Activated B cell treated with CpG ODN at 0.5 μM for 24 hours (primary cell): ENCODE measurements at regions of chr19 and their contacts with region 1.

Region 1: DNA sequence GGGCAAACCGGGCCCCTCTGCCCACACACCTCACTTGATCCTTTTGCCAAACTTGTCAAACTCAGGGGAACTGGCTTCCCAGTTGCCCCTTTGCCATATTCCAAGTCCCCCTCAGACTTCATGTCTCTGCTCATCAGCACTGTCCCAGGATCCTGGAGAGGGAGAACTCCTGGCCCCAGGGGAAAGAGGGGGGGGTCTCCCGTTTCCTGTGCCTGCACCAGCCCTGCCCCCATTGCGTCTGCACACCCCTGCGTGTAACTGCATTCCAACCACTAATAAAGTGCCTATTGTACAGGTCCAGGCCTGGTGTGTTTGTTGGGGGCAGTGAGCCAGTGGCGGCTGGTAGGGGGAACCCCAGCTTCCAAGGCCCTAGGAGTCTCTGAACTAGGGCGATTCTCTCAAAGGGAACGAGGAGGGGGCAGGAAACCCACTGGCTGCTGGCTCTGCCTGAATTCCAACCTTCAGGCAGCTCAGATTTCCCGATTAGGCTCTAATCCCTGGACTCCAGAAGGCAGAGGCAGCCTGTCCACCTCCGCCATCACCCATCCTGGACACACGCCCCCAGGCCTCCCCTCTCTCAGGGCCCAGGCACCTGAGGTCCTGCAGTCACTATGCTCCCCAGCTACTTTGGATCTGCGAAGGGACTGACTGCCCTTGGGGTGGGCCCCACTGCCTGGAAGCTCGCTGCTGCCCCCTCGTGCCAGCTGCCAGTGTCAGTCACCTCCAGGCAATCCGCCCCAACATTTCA is 9.7 kb upstream of the ILF3 start:
- DNase-seq: peak; percentile 80
- ATAC-seq: peak; percentile 82
- H3K4me3 Mint-ChIP-seq: no peak overlapping the region
- H3K27ac Mint-ChIP-seq: peak overlapping the region; percentile 84
- H3K4me1 Mint-ChIP-seq: peaks cover 23% of the 10 kb centered on the region
- H3K27me3 Mint-ChIP-seq: no peaks in the 10 kb centered on the region
- CTCF ChIP-seq: peak; percentile 66

Region 2: GRCh38 chr19:9986787-9987281 is 657.6 kb before region 1 on chr19:
- CTCF ChIA-PET with region 1: no interaction called
- POLR2A ChIA-PET with region 1: no interaction called
- intact Hi-C with region 1: no loop called
- DNase-seq: no peak
- ATAC-seq: no peak
- H3K4me3 Mint-ChIP-seq: no peak overlapping the region
- H3K27ac Mint-ChIP-seq: no peak overlapping the region
- H3K4me1 Mint-ChIP-seq: peaks cover 6% of the 10 kb centered on the region
- H3K27me3 Mint-ChIP-seq: peaks cover 12% of the 10 kb centered on the region
- CTCF ChIP-seq: no peak

Region 3: GRCh38 chr19:10517760-10518443 is 126.5 kb before region 1 on chr19:
- CTCF ChIA-PET with region 1: no interaction called
- POLR2A ChIA-PET with region 1: no interaction called
- intact Hi-C with region 1: no loop called
- DNase-seq: peak; percentile 21
- ATAC-seq: peak; percentile 34
- H3K4me3 Mint-ChIP-seq: peak overlapping the region; percentile 28
- H3K27ac Mint-ChIP-seq: no peak overlapping the region
- H3K4me1 Mint-ChIP-seq: peaks cover 33% of the 10 kb centered on the region
- H3K27me3 Mint-ChIP-seq: peaks cover 50% of the 10 kb centered on the region
- CTCF ChIP-seq: no peak

Region 4: DNA sequence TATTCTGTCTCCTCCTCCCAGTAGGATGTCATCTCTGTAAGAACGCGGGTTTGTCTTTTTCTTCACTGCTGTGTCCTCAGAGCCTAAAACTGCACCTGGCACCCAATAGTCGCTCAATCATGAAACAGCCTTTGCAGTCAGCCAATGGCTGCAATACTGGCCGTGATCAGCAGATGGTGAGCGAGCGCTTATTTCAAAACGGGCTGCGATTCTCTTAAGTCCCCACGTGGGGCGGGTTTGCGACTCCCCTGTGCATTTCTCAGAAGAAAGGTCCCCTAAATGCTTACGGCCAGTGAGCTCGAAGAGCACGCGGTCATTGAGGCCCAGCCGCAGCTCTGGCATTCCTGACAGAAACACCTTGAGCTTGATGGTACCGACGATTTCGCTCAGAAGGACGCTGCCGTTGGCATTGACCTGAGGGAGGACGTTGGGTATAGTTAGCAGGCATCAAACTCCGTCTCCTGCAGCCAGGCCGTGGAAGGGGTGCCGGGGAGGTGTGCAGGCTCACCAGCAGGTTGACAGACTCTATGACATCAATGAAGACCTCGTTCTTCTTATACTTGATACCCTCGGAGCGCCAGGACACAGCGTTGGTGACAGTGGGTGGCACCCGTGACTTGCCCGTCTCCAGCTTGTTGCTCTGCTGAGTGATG is 63.3 kb before region 1 on chr19:
- CTCF ChIA-PET with region 1: interaction called, 353 read pairs
- POLR2A ChIA-PET with region 1: interaction called, 68 read pairs
- intact Hi-C with region 1: loop called (anchors 1 kb)
- DNase-seq: peak; percentile 80
- ATAC-seq: peak; percentile 100
- H3K4me3 Mint-ChIP-seq: no peak overlapping the region
- H3K27ac Mint-ChIP-seq: no peak overlapping the region
- H3K4me1 Mint-ChIP-seq: peaks cover 16% of the 10 kb centered on the region
- H3K27me3 Mint-ChIP-seq: no peaks in the 10 kb centered on the region
- CTCF ChIP-seq: peak; percentile 73

Region 5: GRCh38 chr19:10593820-10594637 is 50.4 kb before region 1 on chr19:
- CTCF ChIA-PET with region 1: interaction called, 13 read pairs
- POLR2A ChIA-PET with region 1: interaction called, 3 read pairs
- intact Hi-C with region 1: no loop called
- DNase-seq: no peak
- ATAC-seq: peak; percentile 51
- H3K4me3 Mint-ChIP-seq: peak overlapping the region; percentile 58
- H3K27ac Mint-ChIP-seq: peak overlapping the region; percentile 74
- H3K4me1 Mint-ChIP-seq: peaks cover 39% of the 10 kb centered on the region
- H3K27me3 Mint-ChIP-seq: no peaks in the 10 kb centered on the region
- CTCF ChIP-seq: no peak

Region 6: DNA sequence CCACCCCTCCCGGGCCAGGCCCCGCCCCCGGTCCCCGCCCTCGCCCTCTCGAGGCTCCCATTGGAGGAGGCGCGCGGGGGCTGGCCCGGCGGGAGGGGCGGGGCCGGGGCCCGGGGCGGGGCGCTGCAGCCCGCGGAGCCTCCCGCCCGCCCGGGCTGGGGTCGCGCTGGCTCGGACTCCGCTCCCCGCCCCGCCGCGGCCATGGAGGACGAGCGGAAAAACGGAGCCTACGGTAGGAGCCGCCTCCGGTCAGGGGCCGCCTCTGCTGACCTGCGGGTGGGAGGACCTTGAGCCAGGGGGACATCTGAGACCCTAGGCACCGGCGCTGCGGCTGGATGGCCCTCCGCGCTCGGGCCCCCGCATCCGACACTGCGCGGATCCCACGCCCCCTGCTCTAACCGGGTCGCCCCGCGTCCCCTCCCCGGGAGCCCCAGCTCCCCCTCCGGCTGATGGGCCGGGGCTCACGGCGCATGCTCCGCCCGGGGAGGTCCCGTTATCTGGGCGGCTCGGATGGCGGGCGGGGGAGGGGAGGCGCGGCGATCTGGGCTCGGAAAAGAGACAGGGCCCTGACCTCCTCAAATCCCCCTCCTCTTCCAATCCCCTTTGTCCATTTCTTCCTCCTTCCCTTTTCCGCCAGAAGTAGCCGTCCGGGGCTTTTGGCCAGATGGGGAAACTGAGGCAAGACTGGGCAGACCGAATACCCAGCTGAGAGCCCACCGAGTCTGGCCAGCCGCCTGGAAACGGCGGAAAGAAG is 41.9 kb before region 1 on chr19:
- CTCF ChIA-PET with region 1: interaction called, 40 read pairs
- POLR2A ChIA-PET with region 1: interaction called, 45 read pairs
- intact Hi-C with region 1: loop called (anchors 1 kb)
- DNase-seq: peak; percentile 86
- ATAC-seq: peak; percentile 73
- H3K4me3 Mint-ChIP-seq: peak overlapping the region; percentile 97
- H3K27ac Mint-ChIP-seq: peak overlapping the region; percentile 98
- H3K4me1 Mint-ChIP-seq: peaks cover 39% of the 10 kb centered on the region
- H3K27me3 Mint-ChIP-seq: no peaks in the 10 kb centered on the region
- CTCF ChIP-seq: no peak

Region 7: GRCh38 chr19:10612491-10613119 is 31.8 kb before region 1 on chr19:
- CTCF ChIA-PET with region 1: interaction called, 10 read pairs
- POLR2A ChIA-PET with region 1: interaction called, 5 read pairs
- intact Hi-C with region 1: no loop called
- DNase-seq: no peak
- ATAC-seq: no peak
- H3K4me3 Mint-ChIP-seq: no peak overlapping the region
- H3K27ac Mint-ChIP-seq: peak overlapping the region; percentile 6
- H3K4me1 Mint-ChIP-seq: peaks cover 61% of the 10 kb centered on the region
- H3K27me3 Mint-ChIP-seq: no peaks in the 10 kb centered on the region
- CTCF ChIP-seq: no peak

Region 8: DNA sequence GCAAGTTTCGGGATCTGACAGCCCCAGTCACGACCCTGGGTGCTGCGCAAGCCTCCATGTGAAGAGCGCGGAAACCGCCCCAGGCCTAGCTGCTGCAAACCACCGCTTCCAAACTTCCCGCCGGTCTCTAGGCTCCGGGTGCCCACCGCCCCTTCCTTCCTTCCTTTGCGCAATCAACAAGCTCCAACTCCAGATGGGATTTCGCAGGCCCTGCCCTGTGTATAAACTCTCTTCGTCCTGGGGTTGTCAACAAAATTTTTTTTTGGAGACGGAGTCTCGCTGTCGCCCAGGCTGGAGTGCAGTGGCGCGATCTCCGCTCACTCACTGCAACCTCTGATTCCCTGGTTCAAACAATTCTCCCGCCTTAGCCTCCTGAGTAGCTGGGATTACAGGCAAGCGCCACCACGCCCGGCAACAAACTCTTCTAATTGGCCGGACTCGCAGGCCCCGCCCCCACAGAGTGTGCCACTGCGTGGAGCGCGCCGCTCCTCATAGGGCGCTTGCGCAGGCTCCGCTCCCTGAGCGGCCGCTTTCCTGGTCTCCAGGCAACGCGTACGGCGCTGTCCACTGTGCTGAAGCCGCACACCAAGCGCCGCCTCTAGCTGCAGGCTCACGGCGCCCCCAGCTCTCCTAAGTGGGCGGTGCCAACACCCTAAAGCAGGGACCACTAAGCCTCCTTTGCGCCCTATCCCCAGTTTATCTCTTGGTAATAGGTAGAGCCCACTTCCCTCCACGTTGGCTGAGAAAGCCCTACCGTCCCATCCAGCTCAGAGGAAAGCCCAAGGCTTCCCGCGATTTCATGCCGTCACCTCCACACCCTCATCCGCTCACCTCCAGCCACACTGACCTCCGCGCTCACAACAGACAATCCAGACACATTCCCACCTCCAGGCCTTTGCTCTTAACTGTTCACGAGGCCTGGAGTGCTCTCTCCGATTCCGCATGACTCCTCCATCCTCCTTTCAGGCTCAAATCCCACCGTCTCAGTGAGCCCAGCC is 51.3 kb after region 1 on chr19:
- CTCF ChIA-PET with region 1: interaction called, 22 read pairs
- POLR2A ChIA-PET with region 1: no interaction called
- intact Hi-C with region 1: no loop called
- DNase-seq: peak; percentile 79
- ATAC-seq: peak; percentile 98
- H3K4me3 Mint-ChIP-seq: peak overlapping the region; percentile 76
- H3K27ac Mint-ChIP-seq: peak overlapping the region; percentile 26
- H3K4me1 Mint-ChIP-seq: peaks cover 17% of the 10 kb centered on the region
- H3K27me3 Mint-ChIP-seq: peaks cover 5% of the 10 kb centered on the region
- CTCF ChIP-seq: no peak

Region 9: GRCh38 chr19:10797541-10798256 is 153.3 kb after region 1 on chr19:
- CTCF ChIA-PET with region 1: no interaction called
- POLR2A ChIA-PET with region 1: no interaction called
- intact Hi-C with region 1: no loop called
- DNase-seq: no peak
- ATAC-seq: peak; percentile 83
- H3K4me3 Mint-ChIP-seq: no peak overlapping the region
- H3K27ac Mint-ChIP-seq: peak overlapping the region; percentile 70
- H3K4me1 Mint-ChIP-seq: peaks cover 12% of the 10 kb centered on the region
- H3K27me3 Mint-ChIP-seq: no peaks in the 10 kb centered on the region
- CTCF ChIP-seq: no peak

Region 10: GRCh38 chr19:11288343-11288742 is 643.9 kb after region 1 on chr19:
- CTCF ChIA-PET with region 1: no interaction called
- POLR2A ChIA-PET with region 1: no interaction called
- intact Hi-C with region 1: no loop called
- DNase-seq: no peak
- ATAC-seq: no peak
- H3K4me3 Mint-ChIP-seq: no peak overlapping the region
- H3K27ac Mint-ChIP-seq: no peak overlapping the region
- H3K4me1 Mint-ChIP-seq: no peaks in the 10 kb centered on the region
- H3K27me3 Mint-ChIP-seq: peaks cover 5% of the 10 kb centered on the region
- CTCF ChIP-seq: no peak